Calu3 (cell line): ENCODE measurements at regions of chr15 and their contacts with region 1.

Region 1: DNA sequence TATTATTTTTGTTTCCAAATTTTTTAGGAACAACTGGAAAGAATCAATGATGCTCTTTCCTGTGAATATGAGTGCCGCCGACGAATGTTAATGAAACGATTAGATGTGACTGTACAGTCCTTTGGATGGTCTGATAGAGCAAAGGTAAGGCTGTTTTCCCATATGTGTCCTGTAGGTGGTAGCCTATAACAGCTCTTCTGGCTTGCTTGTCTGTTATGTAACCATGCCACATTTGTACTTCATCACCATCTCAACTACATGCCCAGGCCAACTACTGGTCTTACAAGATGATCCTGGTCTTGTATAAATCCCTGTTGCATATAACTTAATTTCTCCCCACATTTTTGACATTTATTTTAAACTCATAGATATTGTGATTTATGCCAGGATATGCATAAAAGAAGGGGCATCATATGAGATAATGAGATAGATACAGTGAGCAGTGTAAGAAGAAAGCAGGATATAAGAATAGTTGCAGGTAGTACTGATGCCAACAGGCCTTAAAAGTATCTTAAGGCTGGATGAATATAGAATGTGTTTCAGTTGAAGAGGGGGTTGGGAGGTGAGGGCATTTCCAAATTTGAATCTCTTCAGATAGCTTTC is 20.3 kb downstream of the FAM98B start:
- DNase-seq: peak; percentile 13
- H3K4me3 Mint-ChIP-seq: no peak overlapping the region
- H3K27ac Mint-ChIP-seq: no peak overlapping the region
- H3K4me1 Mint-ChIP-seq: no peaks in the 10 kb centered on the region
- H3K27me3 Mint-ChIP-seq: no peaks in the 10 kb centered on the region
- CTCF ChIP-seq: peak; percentile 21

Region 2: GRCh38 chr15:38349251-38349650 is 125.0 kb before region 1 on chr15:
- CTCF ChIA-PET with region 1: no interaction called
- intact Hi-C with region 1: no loop called
- DNase-seq: no peak
- H3K4me3 Mint-ChIP-seq: no peak overlapping the region
- H3K27ac Mint-ChIP-seq: no peak overlapping the region
- H3K4me1 Mint-ChIP-seq: no peaks in the 10 kb centered on the region
- H3K27me3 Mint-ChIP-seq: no peaks in the 10 kb centered on the region
- CTCF ChIP-seq: no peak

Region 3: DNA sequence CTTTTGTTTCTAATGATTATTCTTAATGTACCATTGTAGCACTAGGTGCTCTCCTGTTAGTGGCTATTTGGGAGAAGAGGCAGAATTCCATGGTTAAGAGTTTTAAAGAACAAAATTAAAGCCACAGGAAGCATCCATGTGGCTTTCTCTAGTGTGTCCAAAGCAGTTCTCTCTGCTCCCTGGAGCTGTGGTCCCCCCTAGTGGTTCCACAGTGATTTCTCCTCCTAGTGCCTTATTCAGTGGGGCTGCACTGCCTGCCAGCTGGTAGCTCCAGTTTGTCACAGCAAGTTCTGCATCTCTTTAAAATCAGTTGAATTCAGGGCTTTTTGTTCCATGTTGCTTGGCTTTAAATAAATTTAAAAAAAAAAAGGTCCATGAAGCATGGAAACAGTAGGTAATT is 59.9 kb before region 1 on chr15:
- CTCF ChIA-PET with region 1: no interaction called
- intact Hi-C with region 1: no loop called
- DNase-seq: peak; percentile 55
- H3K4me3 Mint-ChIP-seq: no peak overlapping the region
- H3K27ac Mint-ChIP-seq: no peak overlapping the region
- H3K4me1 Mint-ChIP-seq: no peaks in the 10 kb centered on the region
- H3K27me3 Mint-ChIP-seq: peaks cover 30% of the 10 kb centered on the region
- CTCF ChIP-seq: no peak

Region 4: DNA sequence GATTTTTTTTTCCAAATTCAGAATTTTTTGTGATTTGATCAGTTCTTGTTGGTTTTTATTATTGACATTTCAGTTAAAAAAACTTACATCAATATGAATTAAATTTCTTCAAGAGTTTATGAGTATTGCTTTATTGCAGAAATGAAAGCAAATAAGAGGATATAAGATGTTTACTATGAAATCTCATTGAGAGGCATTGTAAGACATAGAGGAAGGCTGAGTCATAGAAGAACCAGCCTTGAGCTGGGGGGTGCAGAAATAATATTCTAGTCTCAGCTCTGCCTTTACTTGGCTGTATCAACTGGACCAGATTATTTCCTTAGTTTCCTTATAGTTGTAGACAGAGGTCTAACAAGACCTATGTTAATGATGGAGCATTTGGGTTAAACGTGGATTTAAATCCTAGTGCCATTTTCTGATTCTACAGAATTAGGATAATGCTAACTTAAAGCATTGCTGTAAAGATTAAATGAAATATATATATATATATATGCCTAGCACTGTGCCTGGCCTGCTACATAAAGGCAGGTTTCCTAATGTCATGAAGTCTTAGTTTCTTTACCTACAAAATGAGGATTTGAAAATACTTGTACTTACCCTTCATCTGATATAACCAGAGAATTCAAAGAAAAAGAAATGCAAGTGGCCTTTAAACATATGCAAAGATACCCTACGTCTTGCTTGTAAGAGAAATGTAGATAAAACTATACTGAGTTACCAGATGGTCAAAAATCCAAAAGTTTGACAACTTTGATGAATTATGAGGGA is 13.0 kb before region 1 on chr15:
- CTCF ChIA-PET with region 1: no interaction called
- intact Hi-C with region 1: loop called (anchors 1 kb)
- DNase-seq: no peak
- H3K4me3 Mint-ChIP-seq: no peak overlapping the region
- H3K27ac Mint-ChIP-seq: no peak overlapping the region
- H3K4me1 Mint-ChIP-seq: peaks cover 6% of the 10 kb centered on the region
- H3K27me3 Mint-ChIP-seq: no peaks in the 10 kb centered on the region
- CTCF ChIP-seq: no peak

Region 5: GRCh38 chr15:38689522-38689921 is 215.3 kb after region 1 on chr15:
- CTCF ChIA-PET with region 1: no interaction called
- intact Hi-C with region 1: no loop called
- DNase-seq: no peak
- H3K4me3 Mint-ChIP-seq: no peak overlapping the region
- H3K27ac Mint-ChIP-seq: no peak overlapping the region
- H3K4me1 Mint-ChIP-seq: no peaks in the 10 kb centered on the region
- H3K27me3 Mint-ChIP-seq: no peaks in the 10 kb centered on the region
- CTCF ChIP-seq: no peak

Region 6: GRCh38 chr15:38768970-38769369 is 294.7 kb after region 1 on chr15:
- CTCF ChIA-PET with region 1: no interaction called
- intact Hi-C with region 1: no loop called
- DNase-seq: no peak
- H3K4me3 Mint-ChIP-seq: no peak overlapping the region
- H3K27ac Mint-ChIP-seq: no peak overlapping the region
- H3K4me1 Mint-ChIP-seq: no peaks in the 10 kb centered on the region
- H3K27me3 Mint-ChIP-seq: peaks cover 21% of the 10 kb centered on the region
- CTCF ChIP-seq: no peak